Left lung (tissue), 14 donors: ENCODE measurements at regions of chr15 and their contacts with region 1.

Region 1: GRCh38 chr15:43225201-43225949 is 4.6 kb upstream of the EPB42 start:
- DNase-seq: peak in 2 of 4 donors; percentile 27 to 60
- ATAC-seq: peak; percentile 94
- H3K4me3 ChIP-seq: no peak overlapping the region
- H3K27ac ChIP-seq: no peak overlapping the region
- H3K4me1 ChIP-seq: no peaks in the 10 kb centered on the region
- H3K27me3 ChIP-seq: no peaks in the 10 kb centered on the region
- CTCF ChIP-seq: peak; percentile 64 to 65

Region 2: GRCh38 chr15:43105077-43105736 is 120.2 kb before region 1 on chr15:
- intact Hi-C with region 1: no loop called
- DNase-seq: no peak
- ATAC-seq: peak; percentile 59
- H3K4me3 ChIP-seq: peak overlapping the region; percentile 61 to 78
- H3K27ac ChIP-seq: peak overlapping the region; percentile 90 to 94
- H3K4me1 ChIP-seq: peaks cover 14 to 50% of the 10 kb centered on the region in 2 donors
- H3K27me3 ChIP-seq: no peaks in the 10 kb centered on the region
- CTCF ChIP-seq: no peak

Region 3: DNA sequence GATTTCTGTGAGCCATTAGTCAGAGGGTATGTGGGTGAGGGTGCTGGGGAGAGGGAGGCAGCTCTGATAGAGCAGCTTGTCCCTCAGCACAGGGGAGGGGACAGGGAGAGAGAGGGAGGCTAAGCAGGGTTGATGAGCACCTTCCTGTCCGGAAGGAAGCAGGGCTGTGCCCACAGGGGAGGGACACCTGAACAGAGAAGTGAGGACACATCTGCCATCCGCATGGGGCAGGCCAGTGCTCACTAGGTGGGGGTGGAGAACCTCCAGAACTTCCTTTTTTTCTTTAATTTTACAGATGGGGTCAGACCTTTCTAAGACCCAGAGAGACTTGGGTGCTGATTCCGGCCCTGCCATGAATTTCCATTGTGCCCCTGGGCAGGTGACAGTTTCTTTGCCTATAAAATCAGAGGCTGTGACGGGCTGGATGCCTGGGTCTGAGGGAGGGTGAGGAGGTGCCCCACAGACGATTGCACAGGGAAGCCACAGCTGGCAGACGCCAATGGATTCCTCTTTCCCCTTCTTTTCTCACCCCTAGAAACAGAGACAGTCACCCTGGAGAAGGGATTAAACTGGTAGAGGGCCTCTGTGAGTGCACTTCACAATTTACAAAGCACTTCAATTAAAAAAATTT is 45.4 kb after region 1 on chr15:
- intact Hi-C with region 1: loop called in 1 of 2 experiments (anchors 10 kb)
- DNase-seq: no peak
- ATAC-seq: no peak
- H3K4me3 ChIP-seq: no peak overlapping the region
- H3K27ac ChIP-seq: peak overlapping the region in 1 of 2 donors; percentile 48
- H3K4me1 ChIP-seq: peaks cover 0 to 6% of the 10 kb centered on the region in 2 donors
- H3K27me3 ChIP-seq: peaks cover 0 to 27% of the 10 kb centered on the region in 2 donors
- CTCF ChIP-seq: no peak